ENCODE measurements at regions of chr3 and their contacts with region 1.

Region 1: DNA sequence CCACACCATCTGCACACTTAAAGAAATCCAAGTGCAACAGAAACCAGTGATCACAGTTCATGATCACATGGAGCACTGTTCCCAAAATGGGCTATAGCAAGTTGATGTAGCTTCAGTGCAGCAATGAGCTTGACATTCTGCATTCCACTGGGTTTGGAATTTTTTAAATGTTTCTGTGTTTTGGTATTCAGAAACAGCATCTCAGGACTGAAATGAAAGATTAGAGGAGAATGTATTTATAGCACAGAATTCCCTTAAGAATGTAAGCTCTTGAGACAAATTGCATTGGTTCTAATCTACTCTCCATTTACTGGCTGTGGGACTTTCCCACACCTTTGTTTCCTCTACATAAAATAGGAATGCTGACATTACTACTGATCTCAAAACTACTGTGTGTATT is 162.7 kb downstream of the FGF12 start:
- DNase-seq: no peak
- H3K4me3 ChIP-seq: no peak overlapping the region
- H3K27ac ChIP-seq: no peak overlapping the region
- H3K4me1 ChIP-seq: no peaks in the 10 kb centered on the region
- H3K27me3 ChIP-seq: no peaks in the 10 kb centered on the region
- CTCF ChIP-seq: no peak
- POLR2A ChIP-seq: no peak

Region 2: DNA sequence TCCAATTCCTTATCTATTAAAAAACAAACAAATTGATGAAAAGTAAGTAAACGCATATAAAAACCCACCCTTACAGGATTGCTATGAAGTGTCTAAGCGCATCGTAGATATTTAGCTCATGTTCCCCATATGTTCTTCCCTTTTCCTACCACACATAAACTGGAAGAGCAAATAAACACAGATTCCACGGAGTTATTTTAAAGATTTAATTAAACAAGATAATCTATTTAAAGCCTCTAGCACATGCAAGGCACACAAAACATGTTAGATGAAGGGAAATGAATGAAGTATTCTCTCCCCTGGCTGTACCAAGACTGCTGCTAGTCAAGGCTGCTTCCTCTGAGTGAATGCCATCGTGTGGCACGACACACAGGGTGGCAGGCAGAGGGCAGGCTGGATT is 241.1 kb after region 1 on chr3:
- intact Hi-C with region 1: loop called (anchors 5 kb)
- DNase-seq: no peak
- H3K4me3 ChIP-seq: no peak overlapping the region
- H3K27ac ChIP-seq: no peak overlapping the region
- H3K4me1 ChIP-seq: no peaks in the 10 kb centered on the region
- H3K27me3 ChIP-seq: no peaks in the 10 kb centered on the region
- CTCF ChIP-seq: no peak
- POLR2A ChIP-seq: no peak

Measured in thyroid gland (tissue), 4 donors.